Dorsolateral prefrontal cortex (tissue), 120 donors: ENCODE measurements at regions of chr20 and their contacts with region 1.

Region 1: DNA sequence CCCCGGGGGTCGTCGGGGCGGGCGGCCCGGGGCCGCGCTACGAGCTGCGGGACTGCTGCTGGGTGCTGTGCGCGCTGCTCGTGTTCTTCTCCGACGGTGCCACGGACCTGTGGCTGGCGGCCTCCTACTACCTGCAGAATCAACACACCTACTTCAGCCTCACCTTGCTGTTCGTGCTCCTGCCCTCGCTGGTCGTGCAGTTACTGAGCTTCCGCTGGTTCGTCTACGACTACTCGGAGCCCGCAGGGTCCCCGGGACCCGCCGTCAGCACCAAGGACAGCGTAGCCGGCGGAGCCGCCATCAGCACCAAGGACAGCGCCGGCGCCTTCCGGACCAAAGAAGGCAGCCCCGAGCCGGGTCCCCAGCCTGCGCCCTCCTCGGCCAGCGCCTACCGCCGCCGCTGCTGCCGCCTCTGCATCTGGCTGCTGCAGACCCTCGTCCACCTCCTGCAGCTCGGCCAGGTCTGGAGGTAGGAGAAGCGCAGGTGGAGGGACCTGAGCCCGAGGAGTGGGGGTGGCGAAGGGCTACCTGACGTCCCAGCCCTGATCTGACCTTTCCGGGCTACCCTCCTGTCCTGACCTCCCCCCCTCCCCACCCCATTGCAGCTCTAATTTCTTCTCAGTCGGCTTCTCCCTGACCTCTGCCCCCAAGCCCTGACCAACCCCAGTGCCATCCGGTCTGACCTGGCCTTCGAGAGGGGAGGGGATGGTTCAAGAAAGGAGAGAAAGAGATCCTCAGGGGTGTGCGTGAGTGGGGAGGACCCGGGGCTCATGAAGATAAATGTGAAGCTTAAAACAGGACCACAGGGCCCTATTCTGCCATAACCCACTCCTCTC is 558 bp downstream of the XKR7 start:
- DNase-seq: peak in 9 of 10 donors; percentile 28 to 77 (median 44)
- H3K4me3 ChIP-seq: peak overlapping the region in 58 of 59 donors; percentile 24 to 75 (median 57)
- H3K27ac ChIP-seq: peak overlapping the region in 10 of 59 donors; percentile 27 to 65 (median 47)
- H3K27me3 ChIP-seq: peaks cover 0 to 32% (median 5%) of the 10 kb centered on the region in 45 donors
- CTCF ChIP-seq: peak in 9 of 56 donors; percentile 11 to 32 (median 17)

Region 2: GRCh38 chr20:31630187-31630790 is 338.2 kb before region 1 on chr20:
- intact Hi-C with region 1: no loop called
- DNase-seq: peak in 4 of 10 donors; percentile 14 to 90 (median 38)
- H3K4me3 ChIP-seq: no peak overlapping the region
- H3K27ac ChIP-seq: peak overlapping the region in 1 of 59 donors; percentile 66
- H3K27me3 ChIP-seq: no peaks in the 10 kb centered on the region
- CTCF ChIP-seq: no peak

Region 3: DNA sequence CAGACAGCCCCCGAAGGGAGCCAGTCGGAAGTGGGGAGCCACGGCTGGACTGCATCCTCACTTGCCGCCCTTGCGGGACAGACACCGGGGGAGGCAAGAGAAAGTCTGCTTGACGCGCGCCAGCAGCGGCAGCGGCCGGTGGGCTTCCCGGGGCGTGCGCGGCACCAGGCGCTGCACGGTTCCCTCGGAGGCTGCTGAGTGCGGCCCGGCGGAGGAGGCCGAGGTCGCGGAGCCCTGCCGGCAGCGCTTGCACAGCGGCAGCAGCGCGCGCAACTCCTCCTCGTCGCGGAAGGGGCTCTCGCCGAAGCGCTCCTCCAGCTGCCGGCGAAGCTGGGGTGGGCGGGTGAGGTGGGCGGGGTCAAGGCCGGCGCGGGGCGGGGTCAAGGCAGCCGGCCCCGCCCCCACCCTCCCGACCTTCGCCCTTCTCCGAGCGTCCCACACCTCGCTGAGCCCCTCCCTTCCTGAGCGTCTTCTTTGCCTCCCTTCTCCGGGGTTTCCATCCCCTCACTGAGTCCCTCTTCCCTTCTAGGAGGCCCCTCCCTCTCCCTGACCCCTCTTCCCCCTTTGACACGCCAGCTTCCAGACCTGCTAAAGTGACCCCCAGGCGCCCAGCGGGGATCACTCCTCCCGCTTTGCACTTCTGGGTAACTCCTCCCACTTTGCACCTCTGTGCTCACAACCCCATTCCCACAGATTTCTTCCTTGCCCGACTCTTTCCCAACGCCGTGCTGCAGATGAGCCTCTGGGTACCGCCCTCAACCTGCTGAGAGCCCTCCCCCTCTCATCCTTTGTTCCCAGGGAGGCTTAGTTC is 107.0 kb before region 1 on chr20:
- intact Hi-C with region 1: loop called in 1 of 2 experiments (anchors 5 kb)
- DNase-seq: peak in 1 of 10 donors; percentile 63
- H3K4me3 ChIP-seq: peak overlapping the region; percentile 29 to 73 (median 59)
- H3K27ac ChIP-seq: peak overlapping the region in 2 of 59 donors; percentile 57 to 60
- H3K27me3 ChIP-seq: peaks cover 0 to 17% (median 0%) of the 10 kb centered on the region in 45 donors
- CTCF ChIP-seq: no peak

Region 4: GRCh38 chr20:33810885-33811777 is 1842.6 kb after region 1 on chr20 and contains the start of gene CHMP4B:
- intact Hi-C with region 1: no loop called
- DNase-seq: peak; percentile 98 to 99 (median 99)
- H3K4me3 ChIP-seq: peak within 1 kb of the TSS; percentile 66 to 100 (median 95)
- H3K27ac ChIP-seq: peak within 1 kb of the TSS in 57 of 59 donors; percentile 16 to 92 (median 83)
- H3K27me3 ChIP-seq: no peaks in the 10 kb centered on the region
- CTCF ChIP-seq: peak in 32 of 56 donors; percentile 7 to 57 (median 29)
- total RNA-seq, gene CHMP4B: 68.7 to 154 (median 115) TPM